Activated CD4-positive, alpha-beta memory T cell treated with anti-CD3 and anti-CD28 coated beads, Interleukin-2, amount 10 ng/mL, durations not matched to agents 7 days and 5 days (primary cell): ENCODE measurements at regions of chr5 and their contacts with region 1.

Region 1: GRCh38 chr5:103475629-103476240 is 86.9 kb downstream of the NUDT12 start:
- DNase-seq: no peak
- H3K4me3 Mint-ChIP-seq: no peak overlapping the region
- H3K27ac Mint-ChIP-seq: no peak overlapping the region
- H3K4me1 Mint-ChIP-seq: no peaks in the 10 kb centered on the region
- H3K27me3 Mint-ChIP-seq: peaks cover 27% of the 10 kb centered on the region

Region 2: GRCh38 chr5:103232393-103232999 is 243.2 kb before region 1 on chr5:
- CTCF ChIA-PET with region 1: interaction called, 29 read pairs
- POLR2A ChIA-PET with region 1: no interaction called
- DNase-seq: no peak
- H3K4me3 Mint-ChIP-seq: no peak overlapping the region
- H3K27ac Mint-ChIP-seq: no peak overlapping the region
- H3K4me1 Mint-ChIP-seq: peaks cover 6% of the 10 kb centered on the region
- H3K27me3 Mint-ChIP-seq: peaks cover 24% of the 10 kb centered on the region

Region 3: DNA sequence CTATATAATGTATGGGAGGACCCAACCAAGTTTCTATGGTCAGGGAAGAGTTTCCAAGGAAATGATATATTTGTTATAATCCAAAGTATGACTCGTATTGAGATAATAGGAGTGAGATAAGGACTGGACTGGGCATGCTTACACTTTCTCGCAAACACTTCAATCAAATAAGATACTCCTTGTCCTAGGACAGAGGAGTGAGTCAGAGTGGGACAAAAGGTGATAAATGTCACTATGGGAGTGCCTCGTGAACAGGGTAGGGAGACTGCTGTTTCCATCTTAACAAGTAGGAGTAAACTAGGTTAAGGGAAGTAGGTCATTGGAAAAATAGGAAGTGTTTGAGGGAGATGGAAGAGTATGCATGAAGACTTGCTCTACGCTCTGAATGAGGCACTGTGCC is 169.9 kb before region 1 on chr5:
- CTCF ChIA-PET with region 1: no interaction called
- POLR2A ChIA-PET with region 1: no interaction called
- DNase-seq: no peak
- H3K4me3 Mint-ChIP-seq: no peak overlapping the region
- H3K27ac Mint-ChIP-seq: no peak overlapping the region
- H3K4me1 Mint-ChIP-seq: no peaks in the 10 kb centered on the region
- H3K27me3 Mint-ChIP-seq: peaks cover 17% of the 10 kb centered on the region